ENCODE measurements at regions of chr4 and their contacts with region 1.

Region 1: DNA sequence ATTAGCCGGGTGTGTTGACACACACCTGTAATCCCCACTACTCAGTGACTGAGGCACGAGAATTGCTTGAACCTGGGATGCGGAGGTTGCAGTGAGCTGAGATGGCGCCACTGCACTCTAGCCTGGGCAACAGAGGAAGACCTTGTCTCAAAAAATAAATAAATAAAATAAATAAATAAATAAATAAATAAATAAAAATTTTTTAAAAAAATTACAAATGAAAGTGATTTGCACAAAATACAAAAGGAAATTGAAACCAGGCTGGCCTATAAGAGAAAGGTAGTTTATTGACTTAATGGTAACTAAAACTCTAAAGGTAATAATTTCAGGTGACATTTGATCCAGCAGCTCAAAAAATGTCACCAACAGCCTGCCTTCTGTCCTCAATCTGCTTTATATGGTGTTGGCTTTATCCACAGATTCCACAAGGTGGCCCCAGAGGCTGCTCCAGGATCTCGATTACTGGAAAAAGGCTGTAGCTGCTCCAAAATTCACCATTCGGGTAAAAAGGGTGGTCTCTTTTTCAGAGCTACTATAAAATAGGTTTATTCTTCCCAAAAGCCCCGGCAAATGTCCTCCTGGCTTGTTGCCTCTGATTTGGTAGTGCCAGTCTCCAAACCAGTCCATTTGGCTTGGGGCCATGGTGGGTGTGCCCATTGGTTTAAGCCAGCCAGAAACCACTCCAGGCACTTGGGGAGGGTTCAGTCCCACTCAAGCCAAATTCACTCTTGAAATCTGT is 61.4 kb upstream of the TRIM2 start:
- DNase-seq: peak in 1 of 2 experiments; percentile 68
- H3K4me3 ChIP-seq: no peak overlapping the region
- H3K27ac ChIP-seq: no peak overlapping the region
- H3K4me1 ChIP-seq: peaks cover 3 to 8% (median 4%) of the 10 kb centered on the region in 4 experiments; a peak in 4 of 7 replicates
- H3K27me3 ChIP-seq: no peaks in the 10 kb centered on the region
- CTCF ChIP-seq: peak; percentile 39 to 84 (median 81)
- EP300 ChIP-seq: no peak
- POLR2A ChIP-seq: no peak
- RAD21 ChIP-seq: peak; percentile 95 to 97

Region 2: GRCh38 chr4:153204247-153205027 is 61.6 kb after region 1 on chr4 and contains the start of gene TRIM2:
- CTCF ChIA-PET with region 1: interaction called, 12 read pairs
- POLR2A ChIA-PET with region 1: interaction called, 3 read pairs
- DNase-seq: peak in 1 of 2 experiments; percentile 72
- H3K4me3 ChIP-seq: peak within 1 kb of the TSS; percentile 45 to 58 (median 50)
- H3K27ac ChIP-seq: no peak within 1 kb of the TSS
- H3K4me1 ChIP-seq: peaks cover 9 to 33% (median 24%) of the 10 kb centered on the region in 4 experiments
- H3K27me3 ChIP-seq: no peaks in the 10 kb centered on the region; a peak in 1 of 7 replicates
- CTCF ChIP-seq: no peak
- EP300 ChIP-seq: no peak
- POLR2A ChIP-seq: peak in 1 of 2 experiments; percentile 41; a peak in 1 of 3 replicates
- RAD21 ChIP-seq: no peak
- total RNA-seq, gene TRIM2: 58.1 and 59.8 TPM in 2 replicates

Region 3: GRCh38 chr4:153318696-153319320 is 175.9 kb after region 1 on chr4:
- CTCF ChIA-PET with region 1: interaction called, 24 read pairs
- POLR2A ChIA-PET with region 1: no interaction called
- DNase-seq: no peak
- H3K4me3 ChIP-seq: no peak overlapping the region
- H3K27ac ChIP-seq: no peak overlapping the region
- H3K4me1 ChIP-seq: no peaks in the 10 kb centered on the region
- H3K27me3 ChIP-seq: no peaks in the 10 kb centered on the region
- CTCF ChIP-seq: peak in 2 of 3 experiments; percentile 62 to 67; a peak in 2 of 4 replicates
- EP300 ChIP-seq: no peak
- POLR2A ChIP-seq: no peak
- RAD21 ChIP-seq: peak; percentile 84 to 85

Region 4: DNA sequence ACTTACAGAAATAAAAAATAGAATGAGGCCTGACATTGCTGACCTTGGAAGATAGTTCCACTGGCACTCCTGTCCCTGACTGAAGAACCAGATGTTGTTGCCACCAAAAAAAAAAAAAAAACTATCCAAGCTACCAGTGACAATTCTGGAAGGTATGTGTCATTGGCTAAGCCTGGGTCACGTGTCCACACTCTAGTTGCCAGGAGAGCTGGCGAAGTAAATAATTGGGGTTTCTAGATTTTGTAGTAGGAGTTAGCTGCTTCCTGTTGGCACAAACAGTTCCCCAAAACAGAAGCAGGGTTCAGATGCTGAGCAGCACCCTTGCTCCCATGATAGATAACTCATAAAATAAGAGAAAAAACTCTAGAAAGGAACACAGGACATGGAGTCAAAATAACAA is 222.1 kb after region 1 on chr4:
- CTCF ChIA-PET with region 1: interaction called, 10 read pairs
- POLR2A ChIA-PET with region 1: no interaction called
- DNase-seq: no peak
- H3K4me3 ChIP-seq: no peak overlapping the region
- H3K27ac ChIP-seq: no peak overlapping the region
- H3K4me1 ChIP-seq: no peaks in the 10 kb centered on the region
- H3K27me3 ChIP-seq: no peaks in the 10 kb centered on the region
- CTCF ChIP-seq: no peak
- EP300 ChIP-seq: no peak
- POLR2A ChIP-seq: no peak
- RAD21 ChIP-seq: no peak

Region 5: DNA sequence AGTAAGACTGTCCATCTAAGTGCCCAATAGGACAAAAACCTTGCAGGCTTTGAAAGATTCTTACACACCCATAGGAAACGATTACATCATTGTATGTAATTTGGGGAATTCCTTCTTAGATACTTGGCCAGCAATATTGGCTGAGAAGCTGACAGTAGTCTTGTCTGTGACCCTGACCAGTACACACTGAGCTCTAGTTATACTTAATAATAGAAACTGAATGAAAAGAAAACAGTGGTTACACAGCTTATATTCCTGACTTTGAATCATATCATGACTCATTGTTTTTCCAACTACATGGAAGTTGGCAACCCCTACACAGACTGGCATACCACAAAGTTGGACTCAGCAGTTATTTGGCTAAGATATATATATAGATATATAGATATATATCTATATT is 534.1 kb after region 1 on chr4:
- CTCF ChIA-PET with region 1: no interaction called
- POLR2A ChIA-PET with region 1: no interaction called
- DNase-seq: no peak
- H3K4me3 ChIP-seq: no peak overlapping the region
- H3K27ac ChIP-seq: no peak overlapping the region
- H3K4me1 ChIP-seq: no peaks in the 10 kb centered on the region
- H3K27me3 ChIP-seq: peaks cover 0 to 5% (median 2%) of the 10 kb centered on the region in 4 experiments; a peak in 4 of 7 replicates
- CTCF ChIP-seq: no peak
- EP300 ChIP-seq: no peak
- POLR2A ChIP-seq: no peak
- RAD21 ChIP-seq: no peak

Measured in H1 (cell line).